Stomach (tissue), 19 donors: ENCODE measurements at regions of chr4 and their contacts with region 1.

Region 1: DNA sequence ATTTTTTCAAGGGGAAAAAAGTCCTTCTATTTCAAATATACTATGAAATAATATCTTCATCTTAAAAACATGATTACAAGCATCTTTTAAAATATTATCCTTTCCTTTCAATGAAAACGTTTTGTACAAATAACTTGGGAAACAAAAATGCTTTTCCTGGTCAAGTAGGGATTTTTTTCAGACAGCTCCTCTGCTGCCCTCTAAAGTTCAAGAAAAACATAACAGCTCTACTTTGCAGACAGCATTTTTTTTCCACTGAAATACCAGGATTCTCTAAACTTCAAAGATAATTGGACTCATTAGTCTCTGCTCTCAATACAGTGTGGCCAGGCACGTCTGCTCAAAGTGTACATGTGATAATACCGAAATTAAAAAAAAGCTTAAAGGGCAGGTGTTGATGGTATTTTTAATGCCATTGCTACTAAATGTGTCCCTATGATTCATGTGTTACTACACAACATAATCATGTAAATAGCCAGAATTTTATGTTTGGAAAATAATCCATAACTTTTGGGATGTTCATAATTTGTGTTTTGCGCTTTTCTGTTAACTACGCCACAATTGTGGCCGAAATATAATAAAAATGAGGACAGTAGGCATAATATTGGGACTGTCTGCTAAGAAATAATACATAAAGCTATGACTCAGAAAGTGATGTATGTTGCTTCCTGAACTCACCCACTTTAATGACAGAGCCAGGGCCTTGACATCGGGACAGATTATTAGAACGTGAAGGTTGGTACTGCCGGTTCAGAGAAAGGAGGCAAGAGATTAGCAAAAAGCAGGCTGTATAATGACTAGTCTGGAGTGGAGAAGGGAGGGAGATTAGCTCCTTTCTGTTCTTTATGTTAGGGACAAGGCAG is 478.9 kb downstream of the KCNIP4 start:
- DNase-seq: peak in 1 of 2 donors; percentile 45
- H3K4me3 ChIP-seq: no peak overlapping the region
- H3K27ac ChIP-seq: no peak overlapping the region
- H3K4me1 ChIP-seq: no peaks in the 10 kb centered on the region
- H3K27me3 ChIP-seq: no peaks in the 10 kb centered on the region
- CTCF ChIP-seq: peak in 5 of 7 experiments; percentile 19 to 60 (median 31)
- EP300 ChIP-seq: no peak
- POLR2A ChIP-seq: no peak

Region 2: DNA sequence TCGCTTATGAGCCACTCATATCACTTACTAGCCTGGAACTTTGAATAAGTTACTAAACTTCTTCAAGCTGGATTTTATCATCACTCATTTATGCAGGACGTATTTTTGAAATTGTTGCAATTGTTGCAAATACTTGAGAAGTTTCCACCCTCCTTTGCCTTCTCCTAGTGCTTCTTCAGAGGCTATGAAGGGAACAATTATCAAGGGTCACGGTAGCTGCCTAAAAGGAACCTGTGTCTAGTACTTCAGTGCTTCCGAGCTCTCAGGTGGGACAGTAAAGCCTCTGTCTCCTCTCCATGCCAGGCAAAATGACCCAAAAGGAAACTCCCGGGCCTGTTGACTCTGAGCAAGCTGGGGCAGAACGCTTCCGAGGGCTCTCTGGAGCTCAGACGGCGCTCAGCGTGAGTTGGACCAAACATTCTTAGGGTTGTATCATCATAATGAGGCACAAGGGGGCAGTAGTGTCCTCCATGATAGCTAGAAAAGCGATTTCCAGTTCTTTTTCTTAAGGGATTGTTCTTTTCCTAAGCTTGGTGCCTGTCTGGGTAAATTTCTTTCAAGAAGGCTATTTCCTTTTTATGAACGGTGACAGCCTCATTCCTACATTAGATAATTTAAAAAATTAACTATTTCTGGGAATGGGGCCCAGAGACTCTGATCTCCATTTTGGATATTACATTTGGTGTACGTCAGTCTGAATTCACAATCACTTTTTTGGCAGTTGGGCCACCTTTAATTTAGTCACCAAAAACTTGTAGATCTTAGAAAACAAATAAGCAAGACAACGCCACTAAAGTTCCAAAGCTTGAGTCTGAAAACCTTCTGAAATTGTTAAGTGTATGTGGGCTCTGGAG is 696.3 kb before region 1 on chr4:
- intact Hi-C with region 1: loop called (anchors 10 kb)
- DNase-seq: peak; percentile 28 to 85
- H3K4me3 ChIP-seq: no peak overlapping the region
- H3K27ac ChIP-seq: no peak overlapping the region
- H3K4me1 ChIP-seq: peaks cover 0 to 8% (median 3%) of the 10 kb centered on the region in 4 donors
- H3K27me3 ChIP-seq: no peaks in the 10 kb centered on the region
- CTCF ChIP-seq: peak in 4 of 7 experiments; percentile 25 to 65 (median 48)
- EP300 ChIP-seq: no peak
- POLR2A ChIP-seq: no peak

Region 3: GRCh38 chr4:21327976-21328700 is 141.5 kb before region 1 on chr4:
- intact Hi-C with region 1: no loop called
- DNase-seq: no peak
- H3K4me3 ChIP-seq: no peak overlapping the region
- H3K27ac ChIP-seq: no peak overlapping the region
- H3K4me1 ChIP-seq: no peaks in the 10 kb centered on the region
- H3K27me3 ChIP-seq: no peaks in the 10 kb centered on the region
- CTCF ChIP-seq: no peak
- EP300 ChIP-seq: no peak
- POLR2A ChIP-seq: no peak